Ascending aorta (tissue), 2 donors: ENCODE measurements at regions of chr5 and their contacts with region 1.

Region 1: GRCh38 chr5:59380350-59380951 is 513.1 kb downstream of the PDE4D start:
- DNase-seq: no peak
- H3K4me3 ChIP-seq: no peak overlapping the region
- H3K27ac ChIP-seq: no peak overlapping the region
- H3K4me1 ChIP-seq: no peaks in the 10 kb centered on the region
- H3K27me3 ChIP-seq: no peaks in the 10 kb centered on the region
- CTCF ChIP-seq: peak; percentile 33 to 57 (median 39)

Region 2: DNA sequence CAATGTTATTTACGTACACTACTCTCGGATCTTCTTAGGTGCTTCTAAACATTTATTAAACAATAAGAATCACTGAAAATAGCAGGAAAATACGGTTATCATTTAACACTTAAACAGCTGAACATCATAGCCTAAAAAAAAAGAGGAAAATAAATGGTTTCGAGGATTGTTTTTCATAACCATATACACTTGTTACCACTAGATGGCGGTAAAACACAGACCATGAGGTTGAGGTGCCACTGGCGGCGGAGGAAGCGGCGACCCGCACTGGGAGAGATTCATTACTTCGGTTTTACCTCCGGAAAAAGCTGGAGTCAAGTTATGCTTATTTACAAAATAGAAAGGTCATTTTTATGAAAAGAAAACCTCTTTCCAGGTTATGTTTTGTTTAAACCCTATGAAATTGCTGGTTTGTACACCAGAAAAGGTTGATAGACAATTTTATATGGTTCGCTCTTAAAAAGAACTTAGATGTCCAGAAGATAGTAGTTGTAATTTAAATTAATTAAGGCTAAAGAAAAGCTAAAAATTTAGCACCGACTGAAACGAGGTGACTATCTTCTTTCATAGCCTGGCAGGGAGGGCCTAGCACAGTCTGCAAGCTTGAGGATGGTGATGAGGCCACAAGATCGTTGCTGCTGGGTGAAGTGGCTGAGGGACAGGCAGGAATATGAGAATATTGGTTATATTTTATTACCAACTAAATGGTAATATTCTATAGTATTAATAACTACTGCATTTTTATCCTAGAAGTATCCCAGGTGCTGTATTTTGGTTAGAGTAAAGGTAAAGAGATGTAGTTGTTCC is 191.8 kb before region 1 on chr5:
- intact Hi-C with region 1: loop called (anchors 1 kb)
- DNase-seq: peak in 1 of 2 donors; percentile 80
- H3K4me3 ChIP-seq: no peak overlapping the region
- H3K27ac ChIP-seq: no peak overlapping the region
- H3K4me1 ChIP-seq: no peaks in the 10 kb centered on the region
- H3K27me3 ChIP-seq: no peaks in the 10 kb centered on the region
- CTCF ChIP-seq: peak; percentile 62 to 79 (median 69)

Region 3: GRCh38 chr5:60677844-60678664 is 1297.6 kb after region 1 on chr5:
- intact Hi-C with region 1: loop called (anchors 10 kb)
- DNase-seq: no peak
- H3K4me3 ChIP-seq: no peak overlapping the region
- H3K27ac ChIP-seq: no peak overlapping the region
- H3K4me1 ChIP-seq: no peaks in the 10 kb centered on the region
- H3K27me3 ChIP-seq: no peaks in the 10 kb centered on the region
- CTCF ChIP-seq: peak; percentile 36 to 52 (median 38)